ENCODE measurements at regions of chrX and their contacts with region 1.

Region 1: GRCh38 chrX:65595460-65595876 is 60.9 kb upstream of the LAS1L start:
- DNase-seq: peak; percentile 94
- H3K4me3 Mint-ChIP-seq: peak overlapping the region; percentile 53
- H3K27ac Mint-ChIP-seq: peak overlapping the region; percentile 90
- H3K4me1 Mint-ChIP-seq: peaks cover 54% of the 10 kb centered on the region
- H3K27me3 Mint-ChIP-seq: no peaks in the 10 kb centered on the region

Region 2: GRCh38 chrX:65575022-65575421 is 20.4 kb before region 1 on chrX:
- CTCF ChIA-PET with region 1: no interaction called
- POLR2A ChIA-PET with region 1: no interaction called
- DNase-seq: no peak
- H3K4me3 Mint-ChIP-seq: no peak overlapping the region
- H3K27ac Mint-ChIP-seq: no peak overlapping the region
- H3K4me1 Mint-ChIP-seq: no peaks in the 10 kb centered on the region
- H3K27me3 Mint-ChIP-seq: no peaks in the 10 kb centered on the region

Region 3: DNA sequence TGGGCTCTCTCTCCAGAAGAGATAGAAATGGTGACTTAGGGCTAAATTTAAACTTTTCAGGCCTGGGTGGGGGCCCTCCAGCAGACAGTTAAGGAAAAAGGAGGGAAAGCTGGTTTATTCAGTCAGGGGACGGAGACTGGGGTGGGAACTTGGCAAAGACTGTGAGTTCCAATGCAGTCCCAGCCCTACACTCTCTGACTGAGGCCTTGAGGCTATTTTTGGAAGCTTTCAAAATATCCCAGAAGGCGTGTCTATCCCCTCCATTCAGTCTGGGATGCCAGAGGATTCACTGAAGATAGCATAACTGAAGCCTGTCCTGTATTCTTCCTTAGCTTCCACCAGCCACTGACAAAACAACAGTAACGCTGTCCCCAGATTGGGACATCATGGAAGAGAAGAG is 39.9 kb after region 1 on chrX:
- CTCF ChIA-PET with region 1: no interaction called
- POLR2A ChIA-PET with region 1: no interaction called
- DNase-seq: no peak
- H3K4me3 Mint-ChIP-seq: no peak overlapping the region
- H3K27ac Mint-ChIP-seq: no peak overlapping the region
- H3K4me1 Mint-ChIP-seq: no peaks in the 10 kb centered on the region
- H3K27me3 Mint-ChIP-seq: no peaks in the 10 kb centered on the region

Region 4: GRCh38 chrX:65667503-65668376 is 72.3 kb after region 1 on chrX and contains the start of gene MSN:
- CTCF ChIA-PET with region 1: interaction called, 10 read pairs
- POLR2A ChIA-PET with region 1: interaction called, 4 read pairs
- DNase-seq: peak; percentile 71
- H3K4me3 Mint-ChIP-seq: peak within 1 kb of the TSS; percentile 93
- H3K27ac Mint-ChIP-seq: peak within 1 kb of the TSS; percentile 92
- H3K4me1 Mint-ChIP-seq: peaks cover 36% of the 10 kb centered on the region
- H3K27me3 Mint-ChIP-seq: no peaks in the 10 kb centered on the region
- total RNA-seq, gene MSN: 617 to 728 TPM

Region 5: DNA sequence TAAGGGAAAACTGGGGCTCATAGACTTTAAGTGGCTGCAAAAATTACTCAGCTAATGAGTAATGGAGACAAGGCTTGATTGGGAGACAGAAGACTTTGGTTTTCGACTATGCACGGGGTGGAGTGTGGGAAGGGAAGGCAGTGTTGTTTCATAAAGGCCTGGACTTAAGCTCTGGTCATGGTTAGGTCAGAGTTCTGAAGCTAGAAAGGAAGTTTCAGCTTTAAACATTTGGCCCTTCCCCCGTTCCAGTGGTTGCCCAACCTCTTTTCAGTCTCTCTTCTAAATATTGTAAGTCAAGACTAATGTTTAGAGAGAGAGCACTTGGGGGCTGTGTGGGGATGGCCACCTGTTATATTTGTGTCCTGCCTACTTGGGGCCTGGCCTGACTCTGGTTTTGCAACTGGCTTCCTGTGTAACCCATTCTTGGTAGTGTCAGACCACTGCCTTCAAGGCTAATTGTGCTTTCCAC is 93.0 kb after region 1 on chrX:
- CTCF ChIA-PET with region 1: interaction called, 10 read pairs
- POLR2A ChIA-PET with region 1: no interaction called
- DNase-seq: no peak
- H3K4me3 Mint-ChIP-seq: no peak overlapping the region
- H3K27ac Mint-ChIP-seq: peak overlapping the region; percentile 66
- H3K4me1 Mint-ChIP-seq: peaks cover 87% of the 10 kb centered on the region
- H3K27me3 Mint-ChIP-seq: no peaks in the 10 kb centered on the region

Region 6: DNA sequence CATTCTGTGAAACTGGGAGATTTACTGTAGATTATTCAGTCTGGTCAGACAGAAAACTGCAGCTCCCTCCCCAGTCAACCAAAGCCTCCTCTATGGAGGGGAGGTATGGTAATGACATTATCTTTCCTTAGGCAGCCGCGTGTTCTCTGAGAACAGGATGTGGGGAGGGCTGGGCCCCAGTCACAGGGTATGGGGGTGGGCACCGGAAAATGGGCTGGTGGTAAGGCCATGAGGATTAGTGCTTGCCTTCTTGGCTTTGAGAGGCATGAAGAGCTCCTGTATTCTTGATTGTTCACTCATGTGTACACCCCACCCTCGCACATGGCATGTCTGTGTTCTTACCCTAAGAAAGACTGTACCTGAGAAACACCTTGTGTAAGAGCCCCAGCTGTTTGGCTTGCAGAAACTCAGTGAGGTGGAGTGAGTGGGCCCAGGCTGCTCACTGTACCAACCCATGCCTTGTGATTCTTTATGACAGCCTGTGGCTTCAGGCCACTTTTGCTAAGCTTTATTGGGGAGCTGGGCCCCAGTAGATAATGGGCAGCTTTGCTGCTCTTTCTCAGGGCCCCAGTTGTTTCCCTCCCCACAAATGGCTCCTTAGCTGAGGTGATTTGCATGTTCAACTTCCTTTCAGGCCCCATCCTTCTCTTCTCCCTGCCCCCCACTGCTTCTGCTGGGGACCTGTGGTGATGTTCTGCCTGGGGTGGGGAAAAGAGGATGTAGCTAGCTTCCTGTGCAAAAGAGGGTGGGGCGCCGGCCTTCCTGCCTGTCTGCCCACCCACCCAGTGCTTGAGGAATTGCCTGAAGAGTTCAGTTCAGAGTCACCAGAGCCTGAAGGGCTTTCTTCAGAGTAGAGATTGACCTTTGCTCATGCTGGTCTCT is 102.7 kb after region 1 on chrX:
- CTCF ChIA-PET with region 1: interaction called, 14 read pairs
- POLR2A ChIA-PET with region 1: no interaction called
- DNase-seq: peak; percentile 79
- H3K4me3 Mint-ChIP-seq: peak overlapping the region; percentile 73
- H3K27ac Mint-ChIP-seq: peak overlapping the region; percentile 90
- H3K4me1 Mint-ChIP-seq: peaks cover 87% of the 10 kb centered on the region
- H3K27me3 Mint-ChIP-seq: no peaks in the 10 kb centered on the region

Region 7: DNA sequence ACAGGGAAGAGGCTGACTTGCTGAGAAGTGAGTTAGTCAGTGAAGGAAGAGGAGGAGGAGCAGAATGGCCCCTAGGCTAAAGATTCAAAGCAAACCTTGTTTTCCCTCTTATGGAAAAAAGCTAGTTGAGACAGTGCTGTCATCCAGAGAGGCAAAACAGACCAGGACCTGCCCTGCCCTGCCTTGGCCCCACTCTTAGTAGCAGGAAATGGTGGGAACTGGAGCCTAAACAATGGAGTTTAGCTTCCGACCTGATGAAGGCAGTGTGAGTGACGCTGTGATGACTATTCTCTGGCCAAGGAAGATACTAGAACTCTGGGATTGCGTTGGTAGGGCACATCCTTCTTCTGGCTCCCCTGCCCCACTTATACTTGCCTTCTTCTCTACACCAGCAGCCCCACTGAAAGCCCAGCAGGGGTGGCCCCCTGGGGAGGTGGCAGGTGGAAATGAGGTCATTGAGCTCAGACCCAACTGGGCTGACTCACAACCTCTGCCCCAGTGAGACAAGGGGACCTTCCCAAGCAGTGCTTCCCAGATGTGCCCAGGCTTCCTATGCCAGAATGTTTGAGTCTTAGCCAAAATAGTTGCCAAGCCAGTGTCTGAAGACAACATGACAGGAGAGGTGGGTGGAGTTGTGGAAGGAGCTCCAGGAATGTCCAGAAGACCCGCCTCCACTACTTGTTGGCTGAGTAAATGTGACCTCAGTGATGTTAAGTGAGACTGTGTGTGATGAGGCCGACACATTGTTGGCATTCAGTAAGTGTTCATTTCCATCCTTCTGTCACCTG is 110.8 kb after region 1 on chrX:
- CTCF ChIA-PET with region 1: interaction called, 14 read pairs
- POLR2A ChIA-PET with region 1: no interaction called
- DNase-seq: no peak
- H3K4me3 Mint-ChIP-seq: no peak overlapping the region
- H3K27ac Mint-ChIP-seq: peak overlapping the region; percentile 85
- H3K4me1 Mint-ChIP-seq: peaks cover 64% of the 10 kb centered on the region
- H3K27me3 Mint-ChIP-seq: no peaks in the 10 kb centered on the region

Measured in activated CD4-positive, alpha-beta T cell treated with anti-CD3 and anti-CD28 coated beads, Interleukin-2, amount 10 ng/mL, durations not matched to agents 7 days and 5 days (primary cell).